ENCODE measurements at regions of chr19 and their contacts with region 1.

Region 1: DNA sequence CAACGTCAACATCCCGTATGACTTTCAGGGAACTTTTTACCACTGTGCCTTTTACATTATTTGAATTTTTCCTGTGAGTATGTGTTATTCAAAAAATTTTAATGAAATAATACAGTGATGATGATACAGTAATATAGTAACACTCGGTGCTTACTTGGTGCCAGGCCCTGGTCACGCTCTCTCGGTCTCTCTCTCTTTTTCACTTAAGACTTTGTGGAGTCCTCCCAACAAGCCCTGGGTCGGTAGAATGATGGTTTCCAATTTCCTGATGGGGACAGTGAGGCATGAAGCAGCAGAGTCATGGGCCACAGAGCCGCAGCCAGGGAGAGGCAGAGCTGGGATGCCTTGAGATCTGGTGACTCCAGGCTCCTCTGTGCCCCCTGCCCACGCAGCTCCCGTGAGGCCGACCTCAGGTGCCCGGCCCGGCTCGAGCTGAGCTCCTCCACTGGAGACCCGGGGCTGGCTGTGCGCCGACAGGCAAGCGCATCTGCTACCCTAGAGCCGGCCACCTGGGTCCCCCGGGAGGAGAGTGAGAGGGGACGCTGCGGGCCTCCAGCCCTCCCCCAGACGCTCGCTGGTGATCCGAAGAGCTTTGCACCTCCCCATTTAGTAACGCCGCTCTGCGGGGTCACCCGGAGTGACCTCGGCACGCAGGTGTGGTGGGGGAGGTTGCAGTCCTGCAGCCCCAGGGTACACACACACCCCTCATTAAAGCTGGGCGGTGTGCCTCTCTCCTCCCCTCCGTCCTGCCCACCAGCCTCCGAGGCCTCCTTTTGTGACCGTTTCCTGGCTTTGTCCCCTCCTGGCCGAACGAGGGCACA is 4.4 kb upstream of the SBK3 start:
- DNase-seq: peak in 3 of 5 donors; percentile 36 to 64 (median 39)
- ATAC-seq: no peak
- H3K4me3 ChIP-seq: peak overlapping the region in 10 of 12 donors; percentile 5 to 48 (median 36)
- H3K27ac ChIP-seq: peak overlapping the region in 11 of 12 donors; percentile 23 to 80 (median 66)
- H3K4me1 ChIP-seq: peaks cover 0 to 48% (median 30%) of the 10 kb centered on the region in 12 donors
- H3K27me3 ChIP-seq: peaks cover 0 to 6% (median 0%) of the 10 kb centered on the region in 9 donors
- CTCF ChIP-seq: peak in 4 of 12 donors; percentile 7 to 22 (median 18)
- POLR2A ChIP-seq: no peak

Region 2: DNA sequence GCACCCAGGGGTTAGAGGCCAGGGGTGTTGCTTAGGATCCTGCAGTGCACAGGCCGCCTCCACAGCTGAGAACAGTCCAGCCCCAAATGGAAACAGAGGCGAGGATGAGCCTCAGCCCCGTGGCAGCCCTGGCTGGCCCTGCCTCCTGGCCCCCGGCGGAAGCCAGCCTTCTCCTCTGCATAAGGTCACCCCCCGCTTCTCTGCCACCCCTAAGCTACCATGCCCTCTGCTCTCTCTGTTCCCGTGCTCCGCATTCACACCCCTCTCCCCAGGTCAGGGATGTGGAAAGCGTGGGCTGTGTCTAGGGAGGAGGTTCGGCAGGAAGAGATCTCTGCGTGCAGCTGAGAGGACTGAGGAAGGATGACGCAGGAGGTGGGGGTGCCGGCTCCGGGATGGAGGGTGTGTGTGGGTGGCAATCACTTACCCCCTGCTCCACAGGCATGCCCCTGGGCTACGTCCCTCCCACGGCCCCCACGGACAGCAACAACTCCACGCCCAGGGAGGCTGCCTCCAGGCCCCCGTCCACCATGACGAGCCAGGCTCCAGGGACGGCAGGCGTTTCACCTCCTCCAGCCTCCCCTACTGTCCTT is 55.4 kb before region 1 on chr19:
- intact Hi-C with region 1: no loop called
- DNase-seq: peak in 4 of 5 donors; percentile 78 to 86 (median 80)
- ATAC-seq: peak; percentile 63 to 93 (median 75)
- H3K4me3 ChIP-seq: peak overlapping the region; percentile 24 to 68 (median 48)
- H3K27ac ChIP-seq: peak overlapping the region; percentile 77 to 99 (median 86)
- H3K4me1 ChIP-seq: peaks cover 0 to 23% (median 14%) of the 10 kb centered on the region in 12 donors
- H3K27me3 ChIP-seq: peaks cover 0 to 11% (median 0%) of the 10 kb centered on the region in 9 donors
- CTCF ChIP-seq: no peak
- POLR2A ChIP-seq: peak in 1 of 2 donors; percentile 29

Region 3: GRCh38 chr19:55563261-55563690 is 13.6 kb after region 1 on chr19:
- intact Hi-C with region 1: loop called in 3 of 10 experiments (anchors 1 to 2 kb)
- DNase-seq: peak; percentile 70 to 90 (median 79)
- ATAC-seq: peak; percentile 91 to 95 (median 94)
- H3K4me3 ChIP-seq: peak overlapping the region in 3 of 12 donors; percentile 36 to 48 (median 37)
- H3K27ac ChIP-seq: peak overlapping the region in 11 of 12 donors; percentile 62 to 93 (median 84)
- H3K4me1 ChIP-seq: peaks cover 0 to 16% (median 0%) of the 10 kb centered on the region in 12 donors
- H3K27me3 ChIP-seq: no peaks in the 10 kb centered on the region
- CTCF ChIP-seq: no peak
- POLR2A ChIP-seq: peak in 1 of 2 donors; percentile 87

Region 4: DNA sequence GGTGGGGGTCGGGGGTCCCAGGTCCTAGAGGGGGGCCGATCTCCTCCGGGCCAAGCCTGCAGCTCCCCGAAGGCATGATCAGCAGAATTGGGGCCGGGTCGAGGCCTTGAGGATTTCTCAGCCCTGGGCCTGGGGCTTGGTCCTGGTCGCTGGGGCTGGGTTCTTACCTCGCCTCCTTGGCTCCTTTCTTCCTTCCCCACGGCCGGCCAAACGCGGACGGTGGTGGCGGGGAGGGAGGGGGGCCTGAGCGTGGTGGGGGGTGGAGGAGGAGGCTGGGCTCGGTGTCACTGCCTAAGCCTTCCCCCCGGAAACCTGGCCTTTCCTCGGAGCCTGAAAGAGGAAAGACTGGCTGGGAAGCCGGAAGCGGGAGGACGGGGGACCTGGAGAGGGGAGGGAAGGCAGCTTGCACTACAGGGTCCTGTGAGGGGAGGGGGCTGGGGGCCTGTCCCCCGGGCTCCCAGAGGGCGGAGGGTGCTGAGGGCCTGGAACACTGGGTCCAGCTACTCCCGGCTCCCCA is 31.0 kb after region 1 on chr19 and contains the start of gene ZNF579:
- intact Hi-C with region 1: loop called in 3 of 10 experiments (anchors 2 to 5 kb)
- DNase-seq: peak; percentile 89 to 91 (median 90)
- ATAC-seq: peak; percentile 78 to 92 (median 86)
- H3K4me3 ChIP-seq: peak within 1 kb of the TSS; percentile 74 to 97 (median 90)
- H3K27ac ChIP-seq: peak within 1 kb of the TSS; percentile 89 to 99 (median 94)
- H3K4me1 ChIP-seq: peaks cover 0 to 25% (median 12%) of the 10 kb centered on the region in 12 donors
- H3K27me3 ChIP-seq: peaks cover 0 to 3% (median 0%) of the 10 kb centered on the region in 9 donors
- CTCF ChIP-seq: no peak
- POLR2A ChIP-seq: no peak
- total RNA-seq, gene ZNF579: 5.4 to 13.9 (median 9.8) TPM

Region 5: DNA sequence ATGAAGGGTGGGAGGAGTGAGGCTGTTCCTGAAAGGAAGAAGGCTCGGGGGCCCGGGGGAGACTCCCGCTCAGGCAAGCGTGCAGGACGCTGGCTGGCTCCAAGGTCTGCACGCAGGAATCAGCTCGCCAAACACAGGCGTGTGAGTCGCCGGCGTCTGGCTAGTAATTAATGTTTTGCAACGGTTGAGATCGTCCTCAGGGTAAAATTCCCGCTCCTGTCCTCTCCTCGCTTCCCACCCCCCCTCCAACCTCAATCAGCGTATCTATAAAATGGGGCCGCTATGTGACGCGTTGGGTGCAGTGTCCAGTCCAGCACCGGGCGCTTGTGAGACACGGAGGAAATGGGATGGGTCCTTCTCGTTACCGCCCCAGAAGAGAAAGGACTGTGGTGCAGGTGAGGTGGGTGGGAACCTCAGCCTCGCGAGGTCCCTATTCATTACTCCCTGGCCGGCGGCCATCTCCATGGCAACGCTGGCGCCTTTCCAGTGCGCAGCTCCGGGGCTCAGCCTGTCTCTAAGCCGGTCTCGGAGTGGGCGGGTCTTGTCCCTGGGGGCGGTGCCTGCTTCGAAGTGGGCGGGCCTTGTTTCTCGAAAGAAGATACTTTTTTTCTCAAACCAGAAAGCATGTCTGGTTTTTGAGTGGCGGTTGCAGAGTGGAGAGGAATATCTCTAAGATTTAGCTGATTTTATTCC is 37.4 kb after region 1 on chr19:
- intact Hi-C with region 1: loop called in 2 of 10 experiments (anchors 5 kb)
- DNase-seq: peak; percentile 94 to 97 (median 95)
- ATAC-seq: peak; percentile 83 to 94 (median 88)
- H3K4me3 ChIP-seq: peak overlapping the region in 10 of 12 donors; percentile 20 to 49 (median 42)
- H3K27ac ChIP-seq: peak overlapping the region in 6 of 12 donors; percentile 9 to 82 (median 24)
- H3K4me1 ChIP-seq: peaks cover 0 to 27% (median 19%) of the 10 kb centered on the region in 12 donors
- H3K27me3 ChIP-seq: peaks cover 0 to 10% (median 0%) of the 10 kb centered on the region in 9 donors
- CTCF ChIP-seq: no peak
- POLR2A ChIP-seq: no peak

Region 6: GRCh38 chr19:55599468-55600279 is 50.0 kb after region 1 on chr19 and contains the start of gene FIZ1:
- intact Hi-C with region 1: loop called in 2 of 10 experiments (anchors 5 kb)
- DNase-seq: peak; percentile 98 to 99 (median 99)
- ATAC-seq: peak; percentile 87 to 96 (median 94)
- H3K4me3 ChIP-seq: peak within 1 kb of the TSS; percentile 62 to 99 (median 86)
- H3K27ac ChIP-seq: peak within 1 kb of the TSS; percentile 92 to 100 (median 99)
- H3K4me1 ChIP-seq: peaks cover 1 to 28% (median 14%) of the 10 kb centered on the region in 12 donors
- H3K27me3 ChIP-seq: no peaks in the 10 kb centered on the region
- CTCF ChIP-seq: no peak
- POLR2A ChIP-seq: no peak
- total RNA-seq, gene FIZ1: 11.2 to 15.4 (median 12.9) TPM